Tibial artery (tissue), 4 donors: ENCODE measurements at regions of chr6 and their contacts with region 1.

Region 1: GRCh38 chr6:166010136-166010535 is 157.5 kb downstream of the TBXT start:
- DNase-seq: no peak
- H3K4me3 ChIP-seq: no peak overlapping the region
- H3K27ac ChIP-seq: no peak overlapping the region
- H3K4me1 ChIP-seq: peaks cover 0 to 40% (median 35%) of the 10 kb centered on the region in 4 donors
- H3K27me3 ChIP-seq: peaks cover 0 to 64% of the 10 kb centered on the region in 2 donors
- CTCF ChIP-seq: no peak

Region 2: DNA sequence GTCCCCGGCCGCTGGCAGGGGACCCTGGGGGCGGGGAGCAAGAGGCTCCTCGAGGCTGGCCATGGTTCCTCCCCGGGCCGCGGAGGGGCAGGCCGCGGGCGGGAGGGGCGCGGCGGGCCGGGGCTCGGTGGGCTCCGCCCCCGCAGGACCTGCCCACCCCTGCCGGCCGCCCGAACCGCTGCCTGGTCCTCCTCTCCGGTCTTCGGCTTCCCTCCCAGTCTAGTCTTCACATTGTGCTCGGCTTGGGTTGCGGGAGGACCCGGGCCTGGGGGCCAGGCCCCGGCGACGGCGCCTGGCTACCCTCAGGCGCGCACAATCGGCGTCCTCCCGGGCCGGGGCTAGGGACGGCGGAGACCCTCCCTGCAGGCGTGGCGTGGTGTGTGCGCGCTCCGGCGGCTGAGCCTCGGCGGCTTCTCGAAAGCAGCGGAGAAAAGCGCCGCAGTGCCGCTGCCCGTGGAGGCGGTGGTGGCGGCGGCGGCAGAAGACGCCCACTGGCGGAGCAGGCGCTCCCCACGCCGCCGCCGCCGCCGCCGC is 347.3 kb before region 1 on chr6 and contains the start of gene PDE10A:
- intact Hi-C with region 1: loop called (anchors 10 kb)
- DNase-seq: peak; percentile 28 to 74
- H3K4me3 ChIP-seq: peak within 1 kb of the TSS; percentile 59 to 60
- H3K27ac ChIP-seq: peak within 1 kb of the TSS; percentile 10 to 62
- H3K4me1 ChIP-seq: peaks cover 4 to 40% (median 34%) of the 10 kb centered on the region in 4 donors
- H3K27me3 ChIP-seq: peaks cover 0 to 64% of the 10 kb centered on the region in 2 donors
- CTCF ChIP-seq: no peak